MCF 10A (cell line): ENCODE measurements at regions of chr5 and their contacts with region 1.

Region 1: GRCh38 chr5:126965061-126965475 is 65.3 kb downstream of the MARCHF3 start:
- DNase-seq: peak; percentile 77
- H3K4me3 Mint-ChIP-seq: no peak overlapping the region
- H3K27ac Mint-ChIP-seq: peak overlapping the region; percentile 36
- H3K4me1 Mint-ChIP-seq: peaks cover 30% of the 10 kb centered on the region
- H3K27me3 Mint-ChIP-seq: no peaks in the 10 kb centered on the region
- CTCF ChIP-seq: no peak

Region 2: GRCh38 chr5:126718246-126718868 is 246.7 kb before region 1 on chr5:
- CTCF ChIA-PET with region 1: no interaction called
- POLR2A ChIA-PET with region 1: no interaction called
- intact Hi-C with region 1: no loop called
- DNase-seq: no peak
- H3K4me3 Mint-ChIP-seq: no peak overlapping the region
- H3K27ac Mint-ChIP-seq: no peak overlapping the region
- H3K4me1 Mint-ChIP-seq: no peaks in the 10 kb centered on the region
- H3K27me3 Mint-ChIP-seq: no peaks in the 10 kb centered on the region
- CTCF ChIP-seq: no peak

Region 3: DNA sequence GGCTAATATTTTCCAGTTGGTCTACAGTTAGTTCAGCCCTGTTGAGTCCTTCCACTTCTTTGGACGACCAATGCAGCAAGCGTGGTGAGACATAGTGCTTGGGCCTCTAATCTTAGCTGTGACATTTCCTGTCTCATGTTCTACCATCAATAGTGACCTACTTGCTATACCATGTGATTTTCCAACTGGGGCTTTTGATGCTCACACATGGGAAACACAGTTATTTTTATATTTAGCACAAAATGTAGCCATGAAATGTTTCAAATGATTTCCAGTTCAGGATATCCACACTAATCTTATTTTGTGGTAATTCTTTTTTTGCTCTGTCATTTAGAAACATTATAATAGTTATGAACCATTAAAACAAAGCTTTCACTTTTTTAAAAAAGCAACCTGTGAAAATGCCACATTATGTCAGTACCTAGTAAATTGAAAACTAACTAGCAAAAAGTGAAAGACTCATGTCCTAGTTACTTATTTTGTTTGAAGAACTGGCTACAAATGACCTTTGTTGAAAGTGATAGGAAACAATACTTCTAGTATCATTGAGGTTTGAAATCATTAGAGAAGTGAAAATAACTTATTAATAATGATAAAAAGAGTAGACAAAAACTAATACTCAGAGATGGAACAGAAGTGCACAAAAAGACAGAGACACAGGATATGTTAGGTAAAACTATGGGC is 47.0 kb after region 1 on chr5:
- CTCF ChIA-PET with region 1: no interaction called
- POLR2A ChIA-PET with region 1: interaction called, 13 read pairs
- intact Hi-C with region 1: loop called (anchors 1 kb)
- DNase-seq: no peak
- H3K4me3 Mint-ChIP-seq: no peak overlapping the region
- H3K27ac Mint-ChIP-seq: no peak overlapping the region
- H3K4me1 Mint-ChIP-seq: peaks cover 20% of the 10 kb centered on the region
- H3K27me3 Mint-ChIP-seq: no peaks in the 10 kb centered on the region
- CTCF ChIP-seq: no peak